ENCODE measurements at regions of chr4 and their contacts with region 1.

Region 1: DNA sequence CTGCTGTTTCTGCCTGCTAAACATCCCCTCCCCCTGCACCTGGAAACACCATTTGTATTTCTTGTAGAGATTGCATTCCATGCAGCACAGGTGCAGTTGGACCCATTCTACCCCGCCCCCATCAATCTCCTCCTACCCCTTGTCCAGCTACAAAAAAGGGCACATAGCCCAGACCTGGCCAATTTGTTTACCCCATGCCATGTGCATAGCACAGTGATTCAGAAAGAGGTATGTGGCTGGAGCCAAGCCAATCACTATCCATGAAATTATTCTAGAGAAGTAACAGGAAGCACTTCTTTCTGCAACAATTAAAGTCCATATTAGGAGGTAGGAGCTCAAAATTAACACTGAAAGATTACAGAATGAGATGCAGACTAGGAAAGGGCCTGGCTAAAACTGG is 20.2 kb upstream of the TMEM184C start:
- DNase-seq: no peak
- ATAC-seq: no peak
- H3K4me3 Mint-ChIP-seq: no peak overlapping the region
- H3K27ac Mint-ChIP-seq: no peak overlapping the region
- H3K4me1 Mint-ChIP-seq: no peaks in the 10 kb centered on the region
- H3K27me3 Mint-ChIP-seq: no peaks in the 10 kb centered on the region
- CTCF ChIP-seq: no peak

Region 2: DNA sequence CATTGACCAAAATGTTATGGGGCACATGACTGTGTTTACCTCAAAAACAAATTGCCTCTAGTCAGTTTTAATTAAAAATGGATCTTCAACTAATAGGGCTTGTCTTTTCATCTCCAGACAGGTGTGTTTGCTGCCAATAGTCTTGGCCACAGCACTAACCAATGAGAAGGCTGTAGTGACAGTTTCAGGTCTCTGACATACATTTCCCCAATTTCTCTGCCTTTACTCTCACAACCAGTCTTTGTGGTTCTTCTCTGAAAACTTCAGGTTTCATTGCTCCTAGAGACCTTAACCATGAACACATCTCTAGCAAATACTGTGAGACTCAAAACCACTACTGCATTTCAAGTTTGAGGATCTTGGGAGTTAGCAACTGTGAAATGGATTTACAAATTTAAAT is 119.5 kb before region 1 on chr4:
- CTCF ChIA-PET with region 1: no interaction called
- POLR2A ChIA-PET with region 1: no interaction called
- intact Hi-C with region 1: no loop called
- DNase-seq: no peak
- ATAC-seq: no peak
- H3K4me3 Mint-ChIP-seq: no peak overlapping the region
- H3K27ac Mint-ChIP-seq: no peak overlapping the region
- H3K4me1 Mint-ChIP-seq: no peaks in the 10 kb centered on the region
- H3K27me3 Mint-ChIP-seq: peaks cover 30% of the 10 kb centered on the region
- CTCF ChIP-seq: no peak

Region 3: GRCh38 chr4:147518846-147519767 is 77.9 kb before region 1 on chr4:
- CTCF ChIA-PET with region 1: interaction called, 16 read pairs
- POLR2A ChIA-PET with region 1: no interaction called
- intact Hi-C with region 1: no loop called
- DNase-seq: peak; percentile 74
- ATAC-seq: peak; percentile 71
- H3K4me3 Mint-ChIP-seq: no peak overlapping the region
- H3K27ac Mint-ChIP-seq: no peak overlapping the region
- H3K4me1 Mint-ChIP-seq: no peaks in the 10 kb centered on the region
- H3K27me3 Mint-ChIP-seq: peaks cover 7% of the 10 kb centered on the region
- CTCF ChIP-seq: peak; percentile 87

Region 4: GRCh38 chr4:148116264-148116663 is 519.3 kb after region 1 on chr4:
- CTCF ChIA-PET with region 1: no interaction called
- POLR2A ChIA-PET with region 1: no interaction called
- intact Hi-C with region 1: no loop called
- DNase-seq: no peak
- ATAC-seq: no peak
- H3K4me3 Mint-ChIP-seq: no peak overlapping the region
- H3K27ac Mint-ChIP-seq: no peak overlapping the region
- H3K4me1 Mint-ChIP-seq: peaks cover 34% of the 10 kb centered on the region
- H3K27me3 Mint-ChIP-seq: no peaks in the 10 kb centered on the region
- CTCF ChIP-seq: no peak

Measured in activated CD8-positive, alpha-beta T cell treated with anti-CD3 and anti-CD28 coated beads for 36 hours (primary cell).